Activated CD8-positive, alpha-beta T cell treated with anti-CD3 and anti-CD28 coated beads, Interleukin-2, amount 10 ng/mL, durations not matched to agents 7 days and 5 days (primary cell): ENCODE measurements at regions of chr9 and their contacts with region 1.

Region 1: DNA sequence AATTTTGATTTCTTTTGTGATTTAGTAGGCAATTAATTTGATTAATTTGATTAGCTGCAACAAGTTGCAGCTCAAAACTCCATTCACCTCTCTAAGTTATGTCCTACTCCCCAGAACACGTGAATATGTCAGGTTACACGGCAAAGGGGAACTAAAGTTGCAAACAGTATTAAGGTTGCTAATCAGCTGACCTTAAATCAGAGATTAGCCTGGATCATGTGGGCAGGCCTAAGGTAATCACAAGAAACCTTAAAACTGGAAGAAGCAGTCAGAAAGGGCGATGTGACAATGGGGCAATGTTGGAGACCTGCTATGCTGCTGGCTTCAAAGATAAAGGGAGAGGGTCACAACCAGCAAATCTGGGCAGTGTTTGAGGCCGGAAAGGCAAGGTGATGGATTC is 47.3 kb upstream of the ANXA1 start:
- DNase-seq: no peak
- ATAC-seq: no peak
- H3K4me3 Mint-ChIP-seq: no peak overlapping the region
- H3K27ac Mint-ChIP-seq: no peak overlapping the region
- H3K4me1 Mint-ChIP-seq: no peaks in the 10 kb centered on the region
- H3K27me3 Mint-ChIP-seq: peaks cover 7% of the 10 kb centered on the region

Region 2: DNA sequence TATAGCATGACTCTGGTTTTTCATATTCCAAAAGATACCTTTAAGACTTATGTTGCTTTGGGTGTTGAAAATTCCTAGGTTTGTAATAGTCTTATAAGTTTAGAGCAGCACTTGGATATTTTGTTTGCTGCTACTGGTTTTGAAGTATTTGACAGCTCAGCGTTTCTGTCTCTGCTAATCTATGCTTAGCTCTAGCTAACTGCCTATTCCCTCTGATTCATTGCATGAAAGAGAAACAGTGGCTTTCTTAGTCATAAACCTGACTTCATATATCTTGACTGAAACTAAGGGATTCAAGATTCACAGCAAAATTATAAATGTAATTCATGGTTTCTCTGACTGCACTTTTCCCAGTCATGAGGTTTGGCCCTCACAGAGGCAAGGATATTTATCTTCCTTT is 11.7 kb after region 1 on chr9:
- CTCF ChIA-PET with region 1: interaction called, 23 read pairs
- POLR2A ChIA-PET with region 1: no interaction called
- DNase-seq: no peak
- ATAC-seq: no peak
- H3K4me3 Mint-ChIP-seq: no peak overlapping the region
- H3K27ac Mint-ChIP-seq: no peak overlapping the region
- H3K4me1 Mint-ChIP-seq: peaks cover 31% of the 10 kb centered on the region
- H3K27me3 Mint-ChIP-seq: no peaks in the 10 kb centered on the region

Region 3: GRCh38 chr9:73143606-73144328 is 39.4 kb after region 1 on chr9:
- CTCF ChIA-PET with region 1: interaction called, 10 read pairs
- POLR2A ChIA-PET with region 1: no interaction called
- DNase-seq: no peak
- ATAC-seq: no peak
- H3K4me3 Mint-ChIP-seq: no peak overlapping the region
- H3K27ac Mint-ChIP-seq: peak overlapping the region; percentile 2
- H3K4me1 Mint-ChIP-seq: peaks cover 23% of the 10 kb centered on the region
- H3K27me3 Mint-ChIP-seq: no peaks in the 10 kb centered on the region

Region 4: GRCh38 chr9:73172901-73173215 is 68.5 kb after region 1 on chr9:
- CTCF ChIA-PET with region 1: interaction called, 124 read pairs
- POLR2A ChIA-PET with region 1: no interaction called
- DNase-seq: no peak
- ATAC-seq: peak; percentile 20
- H3K4me3 Mint-ChIP-seq: no peak overlapping the region
- H3K27ac Mint-ChIP-seq: no peak overlapping the region
- H3K4me1 Mint-ChIP-seq: peaks cover under 1% of the 10 kb centered on the region
- H3K27me3 Mint-ChIP-seq: no peaks in the 10 kb centered on the region